ENCODE measurements at regions of chr14 and their contacts with region 1.

Region 1: GRCh38 chr14:31510222-31510621 is 22.4 kb upstream of the GPR33 start:
- DNase-seq: peak; percentile 20
- H3K4me3 ChIP-seq: no peak overlapping the region
- H3K27ac ChIP-seq: no peak overlapping the region
- H3K4me1 ChIP-seq: no peaks in the 10 kb centered on the region
- H3K27me3 ChIP-seq: no peaks in the 10 kb centered on the region
- CTCF ChIP-seq: peak; percentile 33 to 46

Region 2: GRCh38 chr14:31456841-31457664 is 53.2 kb before region 1 on chr14 and contains the start of gene DTD2:
- CTCF ChIA-PET with region 1: no interaction called
- dilution Hi-C with region 1: no loop called
- in situ Hi-C with region 1: no loop called
- intact Hi-C with region 1: no loop called
- DNase-seq: peak; percentile 93
- H3K4me3 ChIP-seq: peak within 1 kb of the TSS; percentile 60 to 77 (median 73)
- H3K27ac ChIP-seq: peak within 1 kb of the TSS; percentile 81
- H3K4me1 ChIP-seq: peaks cover 9% of the 10 kb centered on the region
- H3K27me3 ChIP-seq: no peaks in the 10 kb centered on the region
- CTCF ChIP-seq: no peak
- total RNA-seq, gene DTD2: 21.4 to 59.5 TPM

Region 3: GRCh38 chr14:31556191-31556590 is 46.0 kb after region 1 on chr14:
- CTCF ChIA-PET with region 1: no interaction called
- dilution Hi-C with region 1: no loop called
- in situ Hi-C with region 1: no loop called
- intact Hi-C with region 1: no loop called
- DNase-seq: peak; percentile 13
- H3K4me3 ChIP-seq: no peak overlapping the region
- H3K27ac ChIP-seq: no peak overlapping the region
- H3K4me1 ChIP-seq: no peaks in the 10 kb centered on the region
- H3K27me3 ChIP-seq: peaks cover 3% of the 10 kb centered on the region
- CTCF ChIP-seq: no peak

Region 4: GRCh38 chr14:31897581-31898186 is 387.5 kb after region 1 on chr14:
- CTCF ChIA-PET with region 1: no interaction called
- dilution Hi-C with region 1: no loop called
- in situ Hi-C with region 1: no loop called
- intact Hi-C with region 1: loop called (anchors 1 kb)
- DNase-seq: no peak
- H3K4me3 ChIP-seq: no peak overlapping the region
- H3K27ac ChIP-seq: no peak overlapping the region
- H3K4me1 ChIP-seq: peaks cover 35% of the 10 kb centered on the region
- H3K27me3 ChIP-seq: no peaks in the 10 kb centered on the region
- CTCF ChIP-seq: peak in 1 of 2 donors; percentile 2

Region 5: DNA sequence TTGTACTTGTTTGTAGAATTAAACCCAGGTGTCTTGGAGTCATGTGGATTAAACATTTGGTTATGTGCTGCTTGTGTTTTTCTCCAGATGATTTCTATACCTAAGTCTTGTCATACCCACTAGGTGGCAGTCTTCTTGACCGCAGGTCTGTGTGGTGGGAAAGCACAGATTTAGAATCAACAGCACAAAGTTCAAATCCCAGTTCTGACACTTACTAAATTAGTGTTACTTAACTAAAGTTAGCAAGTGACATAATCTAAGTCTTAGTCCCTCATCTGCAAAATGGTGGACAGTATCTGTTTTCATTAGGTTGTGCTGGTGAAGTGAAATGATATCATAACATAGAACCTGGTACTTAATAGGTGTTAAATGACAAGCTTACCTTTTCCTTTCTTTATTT is 415.9 kb after region 1 on chr14:
- CTCF ChIA-PET with region 1: no interaction called
- dilution Hi-C with region 1: no loop called
- in situ Hi-C with region 1: loop called in 1 of 2 experiments (anchors 25 kb)
- intact Hi-C with region 1: loop called (anchors 2 kb)
- DNase-seq: no peak
- H3K4me3 ChIP-seq: no peak overlapping the region
- H3K27ac ChIP-seq: no peak overlapping the region
- H3K4me1 ChIP-seq: peaks cover 22% of the 10 kb centered on the region
- H3K27me3 ChIP-seq: no peaks in the 10 kb centered on the region
- CTCF ChIP-seq: peak; percentile 40 to 60

Region 6: DNA sequence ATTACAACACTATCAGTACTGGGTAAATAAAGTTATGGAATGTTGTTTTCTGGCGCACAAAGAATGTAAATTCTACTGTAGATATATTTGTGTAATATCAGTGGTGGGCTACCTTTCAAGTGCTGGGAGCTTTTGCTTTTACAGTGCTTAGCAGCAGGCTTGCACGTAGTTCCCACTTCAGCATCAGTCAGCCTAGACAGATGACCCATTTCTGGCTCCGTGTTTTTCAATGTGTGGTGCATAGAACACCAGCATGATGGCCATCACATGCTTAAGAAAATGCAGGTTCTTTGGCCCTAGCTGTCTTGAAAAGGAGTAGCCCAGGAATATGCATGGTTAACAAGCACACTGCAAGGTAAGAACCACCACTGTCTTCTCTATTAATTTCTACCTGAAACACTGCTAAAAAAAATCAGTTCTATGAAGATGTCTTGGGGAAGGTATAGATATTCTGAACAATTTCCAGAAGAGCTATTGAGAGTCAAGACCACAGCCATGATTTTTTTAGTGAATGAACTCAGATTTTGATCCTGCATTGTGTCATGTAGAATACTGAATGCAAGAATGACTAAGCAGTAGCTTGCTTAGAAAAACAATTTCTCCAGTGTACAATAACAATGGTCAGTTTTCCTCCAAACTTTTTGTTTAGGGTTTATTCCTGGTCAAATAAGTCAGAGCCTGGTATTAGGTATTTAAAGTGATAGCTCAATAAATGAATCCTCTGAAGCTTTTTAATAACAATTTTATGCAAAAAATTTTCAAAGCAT is 1014.6 kb after region 1 on chr14:
- CTCF ChIA-PET with region 1: no interaction called
- dilution Hi-C with region 1: no loop called
- in situ Hi-C with region 1: loop called in 1 of 2 experiments (anchors 25 kb)
- intact Hi-C with region 1: no loop called
- DNase-seq: no peak
- H3K4me3 ChIP-seq: no peak overlapping the region
- H3K27ac ChIP-seq: no peak overlapping the region
- H3K4me1 ChIP-seq: no peaks in the 10 kb centered on the region
- H3K27me3 ChIP-seq: no peaks in the 10 kb centered on the region
- CTCF ChIP-seq: no peak

Region 7: GRCh38 chr14:32560209-32560857 is 1050.1 kb after region 1 on chr14:
- CTCF ChIA-PET with region 1: interaction called, 4 read pairs
- dilution Hi-C with region 1: no loop called
- in situ Hi-C with region 1: no loop called
- intact Hi-C with region 1: loop called (anchors 2 kb)
- DNase-seq: peak; percentile 74
- H3K4me3 ChIP-seq: no peak overlapping the region
- H3K27ac ChIP-seq: peak overlapping the region; percentile 53
- H3K4me1 ChIP-seq: peaks cover 19% of the 10 kb centered on the region
- H3K27me3 ChIP-seq: no peaks in the 10 kb centered on the region
- CTCF ChIP-seq: peak; percentile 84 to 98

Measured in mammary epithelial cell (primary cell).